ENCODE measurements at regions of chr17 and their contacts with region 1.

Region 1: DNA sequence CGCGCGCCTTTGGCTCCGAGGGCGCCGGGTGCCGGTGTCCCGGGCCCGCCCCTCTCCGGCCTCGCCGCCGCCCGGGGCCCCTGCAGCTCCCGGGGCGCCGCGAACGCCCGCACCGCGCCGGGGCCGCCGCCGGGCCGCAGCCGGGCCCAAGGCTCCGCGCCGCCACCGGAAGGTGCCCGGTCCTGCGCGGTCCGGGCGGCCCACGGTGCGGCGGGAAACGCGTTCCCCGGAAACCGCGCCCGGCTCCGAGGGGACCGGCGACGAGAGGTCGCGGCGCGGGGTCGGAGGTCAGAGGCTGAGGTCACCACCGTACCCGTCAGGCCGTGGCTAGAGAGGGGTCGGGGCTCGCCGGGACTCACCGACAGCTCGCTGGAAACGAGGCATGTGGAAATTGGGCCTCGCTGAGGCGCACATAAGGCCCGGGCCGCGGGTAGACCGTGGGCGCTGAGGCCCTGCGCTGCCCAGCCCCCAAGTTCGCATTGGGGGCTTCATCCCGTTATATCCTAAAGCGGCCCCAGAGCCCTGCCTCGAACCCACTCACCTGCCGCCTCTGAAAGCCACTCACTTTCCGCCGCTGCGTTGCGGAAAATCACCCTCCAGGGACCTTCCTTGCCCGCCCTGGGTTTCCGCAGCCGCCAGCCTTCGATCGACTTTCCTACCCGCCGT is at the start of gene DUS1L:
- DNase-seq: peak; percentile 73 to 84
- ATAC-seq: peak; percentile 86 to 94 (median 90)
- H3K4me3 ChIP-seq: peak within 1 kb of the TSS; percentile 98
- H3K27ac ChIP-seq: peak within 1 kb of the TSS; percentile 94
- H3K4me1 ChIP-seq: peaks cover 9% of the 10 kb centered on the region
- H3K27me3 ChIP-seq: no peaks in the 10 kb centered on the region
- CTCF ChIP-seq: no peak
- total RNA-seq, gene DUS1L: 72.6 to 136 (median 104) TPM

Region 2: GRCh38 chr17:81885869-81886549 is 179.8 kb before region 1 on chr17:
- intact Hi-C with region 1: no loop called
- DNase-seq: peak; percentile 81 to 92
- ATAC-seq: peak; percentile 95 to 96 (median 96)
- H3K4me3 ChIP-seq: peak overlapping the region; percentile 1
- H3K27ac ChIP-seq: peak overlapping the region; percentile 96
- H3K4me1 ChIP-seq: peaks cover 49% of the 10 kb centered on the region
- H3K27me3 ChIP-seq: no peaks in the 10 kb centered on the region
- CTCF ChIP-seq: no peak

Region 3: GRCh38 chr17:81959362-81960129 is 106.2 kb before region 1 on chr17:
- intact Hi-C with region 1: no loop called
- DNase-seq: peak; percentile 75 to 88
- ATAC-seq: peak; percentile 82 to 87 (median 84)
- H3K4me3 ChIP-seq: peak overlapping the region; percentile 66
- H3K27ac ChIP-seq: no peak overlapping the region
- H3K4me1 ChIP-seq: peaks cover 27% of the 10 kb centered on the region
- H3K27me3 ChIP-seq: peaks cover 0 to 23% (median 3%) of the 10 kb centered on the region in 3 donors
- CTCF ChIP-seq: peak; percentile 90

Region 4: DNA sequence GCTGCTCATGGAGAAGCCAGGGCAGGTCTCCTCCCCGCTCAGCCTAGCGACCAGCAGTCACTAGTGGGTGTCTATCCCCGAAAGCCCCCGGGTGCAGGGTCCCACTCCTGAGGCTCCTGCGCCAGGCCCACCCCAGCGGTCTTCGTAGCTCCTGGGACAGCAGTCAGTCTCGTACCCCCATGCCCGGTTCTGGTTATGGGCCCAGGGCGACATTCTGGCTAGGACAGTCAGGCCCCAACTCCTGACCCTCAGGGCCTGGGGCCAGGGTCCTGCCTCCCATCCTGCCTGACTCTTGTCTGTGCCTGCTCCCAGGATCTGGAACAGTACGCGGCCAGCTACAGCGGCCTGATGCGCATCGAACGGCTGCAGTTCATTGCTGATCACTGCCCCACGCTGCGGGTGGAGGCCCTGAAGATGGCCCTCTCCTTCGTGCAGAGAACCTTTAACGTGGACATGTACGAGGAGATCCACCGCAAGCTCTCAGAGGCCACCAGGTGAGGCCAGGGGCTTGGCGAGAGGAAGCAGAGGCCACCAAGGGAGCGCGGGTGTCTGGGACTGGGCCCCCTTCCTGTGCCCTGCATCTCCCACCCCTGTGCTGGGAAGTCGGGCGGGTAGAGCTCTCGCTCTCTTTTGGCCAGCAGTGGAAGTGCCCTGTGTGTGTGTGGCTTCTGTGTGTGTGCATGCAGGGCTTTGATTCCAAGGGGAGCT is 12.1 kb before region 1 on chr17:
- intact Hi-C with region 1: loop called in 1 of 2 experiments (anchors 1 kb)
- DNase-seq: peak; percentile 10 to 53
- ATAC-seq: no peak
- H3K4me3 ChIP-seq: no peak overlapping the region
- H3K27ac ChIP-seq: no peak overlapping the region
- H3K4me1 ChIP-seq: peaks cover 26% of the 10 kb centered on the region
- H3K27me3 ChIP-seq: no peaks in the 10 kb centered on the region
- CTCF ChIP-seq: no peak

Region 5: DNA sequence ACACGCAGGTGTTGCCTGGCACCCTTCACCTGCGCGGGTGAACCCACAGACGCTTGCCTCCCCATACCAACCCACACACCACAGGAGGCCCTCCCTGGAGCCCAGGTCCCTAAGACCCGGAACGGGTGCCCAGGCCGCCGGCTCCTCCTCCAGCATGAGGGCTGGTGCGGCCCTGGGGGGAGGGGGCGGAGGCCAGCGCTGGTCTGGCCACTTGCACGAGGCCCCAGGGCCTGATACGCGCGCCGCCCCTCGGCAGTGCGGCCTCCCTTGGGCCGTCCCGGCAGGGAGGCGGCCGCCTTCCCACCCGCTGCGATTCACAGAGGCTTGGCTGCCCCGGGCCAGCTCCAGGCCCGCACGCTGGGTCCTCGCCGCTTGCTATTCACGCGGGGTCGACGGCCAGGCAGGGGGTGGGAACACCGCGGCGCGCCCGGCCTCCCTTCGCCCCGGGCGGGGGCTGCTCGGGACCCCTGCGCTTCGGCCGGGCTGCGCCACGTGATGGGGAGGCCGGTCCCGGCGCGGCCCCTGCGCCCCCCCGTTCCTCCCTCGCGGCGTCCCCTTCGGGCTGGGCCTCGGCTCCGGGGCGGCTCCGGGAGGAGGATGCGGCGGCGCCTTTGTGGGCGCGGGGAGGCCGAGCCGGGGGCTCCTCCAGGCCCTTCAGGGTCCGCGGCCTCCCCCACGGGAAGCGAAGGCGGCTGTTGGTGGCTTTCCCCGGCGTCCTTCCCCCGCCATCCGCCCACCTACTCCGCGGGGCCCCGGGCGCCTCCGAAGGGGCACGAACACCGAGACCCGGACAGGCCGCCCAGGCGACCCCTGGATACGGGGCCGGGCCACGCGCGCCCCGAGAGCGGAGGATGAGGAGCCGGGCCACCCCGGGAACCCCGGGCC is 31.7 kb after region 1 on chr17:
- intact Hi-C with region 1: loop called in 1 of 2 experiments (anchors 2 kb)
- DNase-seq: peak; percentile 47 to 71
- ATAC-seq: no peak
- H3K4me3 ChIP-seq: peak overlapping the region; percentile 87
- H3K27ac ChIP-seq: peak overlapping the region; percentile 97
- H3K4me1 ChIP-seq: peaks cover 29% of the 10 kb centered on the region
- H3K27me3 ChIP-seq: no peaks in the 10 kb centered on the region
- CTCF ChIP-seq: no peak